K562 (cell line): ENCODE measurements at regions of chr1 and their contacts with region 1.

Region 1: GRCh38 chr1:156500797-156501499 is 373 bp upstream of the MEF2D start:
- DNase-seq: peak; percentile 94 to 99 (median 98)
- ATAC-seq: peak; percentile 86
- H3K4me3 ChIP-seq: peak overlapping the region; percentile 71
- H3K27ac ChIP-seq: peak overlapping the region; percentile 97
- H3K4me1 ChIP-seq: peaks cover 74 to 79% of the 10 kb centered on the region in 2 experiments
- H3K27me3 ChIP-seq: no peaks in the 10 kb centered on the region; a peak in 1 of 5 replicates
- CTCF ChIP-seq: peak; percentile 70 to 78 (median 76)
- EP300 ChIP-seq: no peak; the same call in 1 of the 2 replicates
- POLR2A ChIP-seq: peak; percentile 89
- RAD21 ChIP-seq: peak in 1 of 2 experiments; percentile 51; a peak in 3 of 4 replicates

Region 2: DNA sequence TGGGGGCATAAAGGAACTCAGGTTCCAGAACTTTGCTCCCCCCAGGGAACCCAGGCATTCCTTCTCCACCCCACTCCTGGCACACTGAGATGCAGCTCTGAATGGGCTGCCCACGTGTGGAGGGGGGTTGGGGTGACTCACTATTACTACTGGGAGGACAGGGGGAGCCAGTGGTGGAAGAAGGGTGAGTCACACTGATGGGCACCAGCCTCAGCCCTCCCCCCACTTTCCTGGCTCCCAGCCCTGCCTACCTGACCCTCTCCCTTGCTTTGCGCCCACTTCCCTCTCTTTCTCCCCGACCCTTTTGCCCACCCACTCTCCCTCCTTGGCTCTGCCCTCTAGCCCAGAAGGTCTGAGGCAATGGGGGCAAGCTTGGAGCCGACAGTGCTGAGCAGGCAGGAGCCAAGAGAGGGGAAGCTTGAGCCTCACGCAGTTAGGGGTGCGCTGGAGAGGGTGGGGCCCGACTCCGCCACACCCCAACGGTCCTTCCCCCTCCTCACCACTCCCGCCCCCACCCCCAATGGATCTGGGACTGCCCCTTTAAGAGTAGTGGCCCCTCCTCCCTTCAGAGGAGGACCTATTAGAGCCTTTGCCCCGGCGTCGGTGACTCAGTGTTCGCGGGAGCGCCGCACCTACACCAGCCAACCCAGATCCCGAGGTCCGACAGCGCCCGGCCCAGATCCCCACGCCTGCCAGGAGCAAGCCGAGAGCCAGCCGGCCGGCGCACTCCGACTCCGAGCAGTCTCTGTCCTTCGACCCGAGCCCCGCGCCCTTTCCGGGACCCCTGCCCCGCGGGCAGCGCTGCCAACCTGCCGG is 386.6 kb before region 1 on chr1 and contains the start of gene LMNA:
- CTCF ChIA-PET with region 1: no interaction called
- POLR2A ChIA-PET with region 1: no interaction called
- in situ Hi-C with region 1: no loop called
- intact Hi-C with region 1: loop called (anchors 5 kb)
- DNase-seq: peak; percentile 90 to 94 (median 92)
- ATAC-seq: peak; percentile 91
- H3K4me3 ChIP-seq: peak within 1 kb of the TSS; percentile 73
- H3K27ac ChIP-seq: peak within 1 kb of the TSS; percentile 92
- H3K4me1 ChIP-seq: peaks cover 24 to 41% of the 10 kb centered on the region in 2 experiments
- H3K27me3 ChIP-seq: no peaks in the 10 kb centered on the region
- CTCF ChIP-seq: 0 out of 6 replicates have a peak, but pooled peaks of 1 of the 3 experiments have one; percentile 5
- EP300 ChIP-seq: 0 out of 2 replicates have a peak, but pooled peaks have one; percentile 25
- POLR2A ChIP-seq: peak; percentile 87
- RAD21 ChIP-seq: no peak
- polyA plus RNA-seq, gene LMNA: 1.00 to 4.5 TPM

Region 3: GRCh38 chr1:156338180-156338973 is 162.6 kb before region 1 on chr1 and contains the starts of genes CCT3 and TSACC:
- CTCF ChIA-PET with region 1: no interaction called
- POLR2A ChIA-PET with region 1: no interaction called
- in situ Hi-C with region 1: no loop called
- intact Hi-C with region 1: loop called (anchors 5 kb)
- DNase-seq: peak; percentile 94 to 100 (median 98)
- ATAC-seq: peak; percentile 95
- H3K4me3 ChIP-seq: peak within 1 kb of the TSS; percentile 63
- H3K27ac ChIP-seq: peak within 1 kb of the TSS; percentile 89
- H3K4me1 ChIP-seq: peaks cover 0 to 9% of the 10 kb centered on the region in 2 experiments; a peak in 3 of 5 replicates
- H3K27me3 ChIP-seq: no peaks in the 10 kb centered on the region
- CTCF ChIP-seq: no peak
- EP300 ChIP-seq: no peak
- POLR2A ChIP-seq: peak; percentile 95
- RAD21 ChIP-seq: no peak
- polyA plus RNA-seq, gene CCT3: 871 to 1,167 TPM
- polyA plus RNA-seq, gene TSACC: 7.3 to 7.4 TPM

Region 4: GRCh38 chr1:156461781-156462647 is 38.9 kb before region 1 on chr1:
- CTCF ChIA-PET with region 1: no interaction called
- POLR2A ChIA-PET with region 1: interaction called, 5 read pairs
- in situ Hi-C with region 1: no loop called
- intact Hi-C with region 1: loop called (anchors 2 kb)
- DNase-seq: no peak
- ATAC-seq: no peak
- H3K4me3 ChIP-seq: no peak overlapping the region
- H3K27ac ChIP-seq: no peak overlapping the region
- H3K4me1 ChIP-seq: peaks cover 18 to 22% of the 10 kb centered on the region in 2 experiments; a peak in 4 of 5 replicates
- H3K27me3 ChIP-seq: no peaks in the 10 kb centered on the region
- CTCF ChIP-seq: no peak
- EP300 ChIP-seq: no peak
- POLR2A ChIP-seq: no peak
- RAD21 ChIP-seq: no peak

Region 5: DNA sequence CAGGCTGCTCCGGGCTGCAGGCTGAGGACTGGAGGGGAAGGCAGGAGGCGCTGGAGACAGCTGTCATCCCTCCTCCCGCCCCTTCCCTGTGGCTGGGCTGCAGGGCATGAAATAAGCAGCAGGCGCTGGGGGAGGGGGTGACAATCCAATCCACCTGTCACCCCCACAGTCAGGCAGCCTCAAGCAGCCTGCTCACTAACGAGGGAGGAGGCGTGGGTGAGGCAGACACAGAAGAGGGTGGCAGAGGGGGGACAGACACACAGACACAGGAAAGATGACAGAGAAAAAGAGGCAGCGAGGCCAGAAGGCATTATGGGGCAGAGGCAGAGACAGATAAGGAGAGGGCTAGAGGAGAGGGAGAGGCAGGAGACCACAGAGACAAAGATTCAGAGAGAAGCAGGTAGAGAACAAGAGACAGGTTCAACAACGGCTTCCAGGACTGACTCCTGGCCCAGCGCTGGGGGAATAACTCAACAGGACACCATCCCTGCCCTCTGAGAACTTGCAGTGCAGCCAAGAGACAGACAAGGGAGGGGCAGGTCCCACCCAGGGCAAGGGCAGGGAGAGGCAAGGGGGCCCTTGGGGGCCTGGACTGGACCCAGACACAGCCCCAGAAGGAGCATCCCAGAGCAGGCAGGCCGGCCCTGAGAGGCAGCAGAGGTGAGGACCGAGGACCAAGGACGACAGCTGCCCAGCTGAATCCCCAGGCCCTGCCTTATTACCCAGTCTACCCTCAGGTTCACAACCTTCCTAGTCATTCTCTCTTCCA is 11.6 kb before region 1 on chr1:
- CTCF ChIA-PET with region 1: no interaction called
- POLR2A ChIA-PET with region 1: interaction called, 62 read pairs
- in situ Hi-C with region 1: no loop called
- intact Hi-C with region 1: loop called (anchors 1 kb)
- DNase-seq: peak; percentile 53 to 68 (median 60)
- ATAC-seq: peak; percentile 60
- H3K4me3 ChIP-seq: no peak overlapping the region
- H3K27ac ChIP-seq: peak overlapping the region; percentile 38; the same call in 2 of the 3 replicates
- H3K4me1 ChIP-seq: peaks cover 58 to 61% of the 10 kb centered on the region in 2 experiments
- H3K27me3 ChIP-seq: no peaks in the 10 kb centered on the region
- CTCF ChIP-seq: peak; percentile 17 to 42 (median 37); a peak in 3 of 6 replicates
- EP300 ChIP-seq: no peak
- POLR2A ChIP-seq: no peak
- RAD21 ChIP-seq: peak in 1 of 2 experiments; percentile 38; a peak in 2 of 4 replicates